ENCODE measurements at regions of chr20 and their contacts with region 1.

Region 1: GRCh38 chr20:59042796-59043660 is 442 bp upstream of the PRELID3B start:
- DNase-seq: peak; percentile 97 to 100
- H3K4me3 ChIP-seq: peak overlapping the region; percentile 89
- H3K4me3 Mint-ChIP-seq: peak overlapping the region; percentile 70
- H3K27ac Mint-ChIP-seq: peak overlapping the region; percentile 80
- H3K4me1 ChIP-seq: peaks cover 50% of the 10 kb centered on the region
- H3K4me1 Mint-ChIP-seq: peaks cover 36% of the 10 kb centered on the region
- H3K27me3 ChIP-seq: no peaks in the 10 kb centered on the region
- H3K27me3 Mint-ChIP-seq: no peaks in the 10 kb centered on the region
- CTCF ChIP-seq: no peak

Region 2: GRCh38 chr20:59016795-59017492 is 26.1 kb before region 1 on chr20:
- CTCF ChIA-PET with region 1: no interaction called
- POLR2A ChIA-PET with region 1: interaction called, 3 read pairs
- intact Hi-C with region 1: loop called (anchors 1 kb)
- DNase-seq: no peak
- H3K4me3 ChIP-seq: no peak overlapping the region
- H3K4me3 Mint-ChIP-seq: no peak overlapping the region
- H3K27ac Mint-ChIP-seq: peak overlapping the region; percentile 24
- H3K4me1 ChIP-seq: peaks cover 17% of the 10 kb centered on the region
- H3K4me1 Mint-ChIP-seq: peaks cover 28% of the 10 kb centered on the region
- H3K27me3 ChIP-seq: no peaks in the 10 kb centered on the region
- H3K27me3 Mint-ChIP-seq: no peaks in the 10 kb centered on the region
- CTCF ChIP-seq: no peak

Region 3: DNA sequence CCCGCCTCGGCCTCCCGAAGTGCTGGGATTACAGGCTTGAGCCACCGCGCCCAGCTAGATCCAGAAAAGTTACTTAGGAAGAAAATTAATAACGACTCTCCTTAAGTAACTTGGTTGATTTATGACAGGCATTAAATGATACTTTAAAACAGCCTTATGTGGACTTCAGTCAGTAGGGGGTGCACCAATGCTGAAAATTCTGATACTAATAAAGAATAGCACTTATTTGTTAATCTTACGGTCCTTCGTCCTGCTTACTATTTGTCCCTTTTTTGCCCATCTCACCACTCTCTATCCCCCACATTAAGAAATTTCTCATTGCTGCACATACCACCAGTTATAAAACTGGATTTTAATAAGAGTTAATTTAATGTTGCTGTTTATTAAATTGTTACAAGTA is 12.3 kb after region 1 on chr20:
- CTCF ChIA-PET with region 1: no interaction called
- POLR2A ChIA-PET with region 1: no interaction called
- intact Hi-C with region 1: no loop called
- DNase-seq: no peak
- H3K4me3 ChIP-seq: no peak overlapping the region
- H3K4me3 Mint-ChIP-seq: no peak overlapping the region
- H3K27ac Mint-ChIP-seq: no peak overlapping the region
- H3K4me1 ChIP-seq: no peaks in the 10 kb centered on the region
- H3K4me1 Mint-ChIP-seq: no peaks in the 10 kb centered on the region
- H3K27me3 ChIP-seq: peaks cover under 1% of the 10 kb centered on the region; the same call in 1 of the 2 replicates
- H3K27me3 Mint-ChIP-seq: peaks cover 11% of the 10 kb centered on the region
- CTCF ChIP-seq: peak; percentile 35 to 44

Region 4: GRCh38 chr20:59403261-59403961 is 360.4 kb after region 1 on chr20:
- CTCF ChIA-PET with region 1: no interaction called
- POLR2A ChIA-PET with region 1: no interaction called
- intact Hi-C with region 1: no loop called
- DNase-seq: peak in 1 of 2 experiments; percentile 92
- H3K4me3 ChIP-seq: no peak overlapping the region; the same call in 1 of the 2 replicates
- H3K4me3 Mint-ChIP-seq: peak overlapping the region; percentile 13
- H3K27ac Mint-ChIP-seq: no peak overlapping the region
- H3K4me1 ChIP-seq: peaks cover 20% of the 10 kb centered on the region
- H3K4me1 Mint-ChIP-seq: no peaks in the 10 kb centered on the region
- H3K27me3 ChIP-seq: no peaks in the 10 kb centered on the region; the same call in 1 of the 2 replicates
- H3K27me3 Mint-ChIP-seq: peaks cover 19% of the 10 kb centered on the region
- CTCF ChIP-seq: peak; percentile 99 to 100

Measured in Caco-2 (cell line).